B cell (primary cell): ENCODE measurements at regions of chr10 and their contacts with region 1.

Region 1: DNA sequence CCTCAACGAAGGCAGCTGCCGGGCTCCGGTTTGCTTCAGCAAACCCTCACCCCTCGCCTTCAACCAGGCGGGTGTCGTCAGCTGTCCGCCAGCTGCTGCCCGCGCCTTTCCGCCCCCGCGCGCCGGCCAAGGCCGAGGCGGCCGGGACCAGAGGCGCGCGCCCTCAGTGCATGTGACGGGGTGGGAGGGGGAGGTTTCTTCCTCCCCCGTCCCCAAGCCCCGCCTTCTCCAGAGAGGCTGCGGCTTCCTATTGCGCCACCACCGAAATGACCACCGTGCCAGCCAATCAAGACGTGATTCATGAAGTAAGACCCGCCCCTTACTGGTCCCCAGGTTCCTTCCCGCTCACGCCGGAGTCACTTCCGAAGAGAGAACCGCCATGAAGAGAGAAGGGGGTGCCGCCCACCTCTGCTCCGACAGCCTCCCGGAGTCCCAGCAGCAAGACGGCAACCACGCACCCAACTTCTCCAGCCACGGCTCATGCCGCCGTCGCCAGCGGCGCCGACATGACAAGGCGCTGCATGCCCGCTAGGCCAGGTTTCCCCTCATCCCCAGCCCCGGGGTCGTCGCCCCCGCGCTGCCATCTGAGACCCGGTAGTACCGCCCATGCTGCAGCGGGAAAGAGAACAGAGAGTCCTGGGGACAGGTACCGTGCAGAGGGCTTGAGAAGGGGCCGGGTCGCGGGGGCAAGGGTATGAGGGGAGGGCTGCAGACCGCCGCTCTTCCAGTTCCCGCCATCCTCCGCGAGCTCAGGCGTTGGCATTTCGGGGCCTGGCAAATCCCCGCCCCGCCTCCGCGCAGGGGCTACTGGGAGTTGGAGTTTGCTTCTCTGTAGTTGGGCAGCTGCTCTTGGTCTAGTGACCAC is at the start of gene SLF2:
- DNase-seq: peak; percentile 97
- ATAC-seq: peak; percentile 97
- H3K4me3 ChIP-seq: peak within 1 kb of the TSS; percentile 66 to 94 (median 90)
- H3K4me3 Mint-ChIP-seq: peak within 1 kb of the TSS; percentile 99
- H3K27ac ChIP-seq: peak within 1 kb of the TSS; percentile 66 to 90
- H3K27ac Mint-ChIP-seq: peak within 1 kb of the TSS; percentile 97
- H3K4me1 ChIP-seq: peaks cover 20% of the 10 kb centered on the region in 2 donors
- H3K4me1 Mint-ChIP-seq: peaks cover 34% of the 10 kb centered on the region
- H3K27me3 ChIP-seq: no peaks in the 10 kb centered on the region
- H3K27me3 Mint-ChIP-seq: no peaks in the 10 kb centered on the region
- CTCF ChIP-seq: no peak
- total RNA-seq, gene SLF2: 65.6 and 66.7 TPM in 2 replicates

Region 2: GRCh38 chr10:99430451-99431189 is 1482.2 kb before region 1 on chr10 and contains the start of gene GOT1:
- CTCF ChIA-PET with region 1: no interaction called
- POLR2A ChIA-PET with region 1: no interaction called
- intact Hi-C with region 1: loop called (anchors 5 kb)
- DNase-seq: peak; percentile 97
- ATAC-seq: peak; percentile 89
- H3K4me3 ChIP-seq: peak within 1 kb of the TSS; percentile 72 to 87 (median 76)
- H3K4me3 Mint-ChIP-seq: peak within 1 kb of the TSS; percentile 99
- H3K27ac ChIP-seq: peak within 1 kb of the TSS; percentile 81 to 85
- H3K27ac Mint-ChIP-seq: peak within 1 kb of the TSS; percentile 96
- H3K4me1 ChIP-seq: peaks cover 13 to 21% of the 10 kb centered on the region in 2 donors
- H3K4me1 Mint-ChIP-seq: peaks cover 28% of the 10 kb centered on the region
- H3K27me3 ChIP-seq: no peaks in the 10 kb centered on the region
- H3K27me3 Mint-ChIP-seq: no peaks in the 10 kb centered on the region
- CTCF ChIP-seq: no peak
- total RNA-seq, gene GOT1: 13.8 and 14.9 TPM in 2 replicates

Region 3: DNA sequence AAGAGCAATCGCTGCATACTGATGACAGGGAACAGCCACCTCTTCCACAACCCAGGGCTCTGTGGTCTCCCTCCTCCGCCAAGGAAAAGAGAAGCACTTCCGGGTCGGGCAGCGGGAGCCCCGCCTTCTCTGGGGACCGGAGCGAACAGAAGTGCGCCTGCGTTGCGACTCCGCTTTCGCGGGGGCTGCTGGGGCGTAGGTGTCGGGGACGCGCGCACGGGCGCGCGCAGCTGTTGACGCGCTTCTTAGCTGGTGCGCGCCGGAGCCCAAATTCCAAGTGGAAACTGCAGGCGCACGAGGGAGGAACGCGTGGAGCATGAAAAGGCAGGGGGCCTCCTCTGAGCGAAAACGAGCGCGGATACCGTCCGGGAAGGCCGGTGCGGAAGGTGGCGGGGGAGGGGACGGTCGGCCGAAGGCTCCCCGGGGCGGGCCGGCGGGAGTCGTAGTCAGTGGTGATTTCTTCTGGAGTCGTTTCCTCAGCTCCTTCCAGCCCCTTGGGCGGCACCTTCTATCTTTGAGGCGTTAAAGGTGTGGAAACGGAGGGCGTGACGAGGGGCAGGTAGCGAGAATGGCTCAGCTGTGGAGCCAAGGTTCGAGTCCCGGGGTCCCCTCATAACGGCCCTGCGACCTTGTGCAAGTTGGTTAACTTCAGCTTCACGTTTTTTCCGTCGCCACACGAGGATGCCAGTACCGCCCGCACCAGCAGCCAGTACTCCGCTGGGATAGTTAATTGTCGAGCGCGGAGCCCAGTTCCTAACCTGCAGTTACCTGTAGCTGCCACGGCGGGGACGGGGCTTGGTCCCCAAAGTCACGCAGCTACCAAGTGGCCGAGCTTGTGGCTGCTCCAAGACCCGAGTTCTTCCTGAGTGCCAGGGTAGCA is 1180.6 kb before region 1 on chr10 and contains the starts of genes COX15 and CUTC:
- CTCF ChIA-PET with region 1: no interaction called
- POLR2A ChIA-PET with region 1: no interaction called
- intact Hi-C with region 1: loop called (anchors 2 kb)
- DNase-seq: peak; percentile 95
- ATAC-seq: peak; percentile 93
- H3K4me3 ChIP-seq: peak within 1 kb of the TSS; percentile 84 to 99 (median 93)
- H3K4me3 Mint-ChIP-seq: peak within 1 kb of the TSS; percentile 95
- H3K27ac ChIP-seq: peak within 1 kb of the TSS; percentile 82 to 83
- H3K27ac Mint-ChIP-seq: peak within 1 kb of the TSS; percentile 99
- H3K4me1 ChIP-seq: peaks cover 13 to 24% of the 10 kb centered on the region in 2 donors
- H3K4me1 Mint-ChIP-seq: peaks cover 32% of the 10 kb centered on the region
- H3K27me3 ChIP-seq: no peaks in the 10 kb centered on the region
- H3K27me3 Mint-ChIP-seq: no peaks in the 10 kb centered on the region
- CTCF ChIP-seq: peak; percentile 64
- total RNA-seq, gene COX15: 39.5 and 47.4 TPM in 2 replicates
- total RNA-seq, gene CUTC: 32.0 and 33.3 TPM in 2 replicates

Region 4: DNA sequence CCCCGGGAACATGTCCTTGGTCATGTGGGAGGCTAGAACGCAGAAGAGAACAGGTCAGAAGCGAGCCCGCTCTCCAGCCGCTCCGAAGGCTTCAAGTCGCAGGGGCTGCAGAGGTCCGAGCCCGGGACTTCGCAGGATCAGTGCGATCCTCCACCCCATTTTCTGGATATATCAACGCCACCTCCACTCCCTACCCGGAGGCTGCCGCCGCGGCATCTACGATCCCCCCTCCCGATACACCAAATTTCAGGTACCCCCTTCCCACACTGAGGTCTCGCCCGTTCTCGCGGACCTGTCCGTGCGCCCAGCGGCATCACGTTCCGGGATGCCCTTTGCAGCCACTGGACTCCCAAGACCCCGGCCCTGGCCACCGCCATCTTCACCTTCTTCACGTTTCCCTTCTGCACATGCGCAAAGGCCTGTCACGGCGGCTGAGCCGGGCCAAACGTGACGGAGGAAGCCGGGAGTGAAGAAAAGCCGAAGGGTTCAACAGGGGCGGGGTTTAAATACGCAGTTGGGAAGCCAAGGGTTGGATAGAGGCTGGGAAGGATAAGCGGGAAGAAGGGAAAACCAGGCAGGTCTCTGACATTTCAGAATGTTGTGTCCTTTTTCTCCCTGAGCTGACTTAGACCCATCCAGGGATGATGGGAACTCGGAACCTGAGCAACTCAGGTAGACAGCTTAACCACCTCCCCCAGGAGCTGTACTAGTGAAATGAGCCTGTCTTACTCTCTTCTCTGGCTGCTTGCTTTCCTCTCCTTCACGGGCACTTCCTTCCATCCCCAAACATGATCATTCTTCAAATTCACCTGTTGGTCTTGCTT is 383.1 kb before region 1 on chr10 and contains the start of gene NDUFB8:
- CTCF ChIA-PET with region 1: no interaction called
- POLR2A ChIA-PET with region 1: no interaction called
- intact Hi-C with region 1: loop called (anchors 2 kb)
- DNase-seq: peak; percentile 89
- ATAC-seq: peak; percentile 87
- H3K4me3 ChIP-seq: peak within 1 kb of the TSS; percentile 65 to 98 (median 81)
- H3K4me3 Mint-ChIP-seq: peak within 1 kb of the TSS; percentile 100
- H3K27ac ChIP-seq: peak within 1 kb of the TSS; percentile 65 to 83
- H3K27ac Mint-ChIP-seq: peak within 1 kb of the TSS; percentile 98
- H3K4me1 ChIP-seq: peaks cover 16 to 21% of the 10 kb centered on the region in 2 donors
- H3K4me1 Mint-ChIP-seq: peaks cover 33% of the 10 kb centered on the region
- H3K27me3 ChIP-seq: no peaks in the 10 kb centered on the region
- H3K27me3 Mint-ChIP-seq: no peaks in the 10 kb centered on the region
- CTCF ChIP-seq: no peak
- total RNA-seq, gene NDUFB8: 131 and 143 TPM in 2 replicates

Region 5: DNA sequence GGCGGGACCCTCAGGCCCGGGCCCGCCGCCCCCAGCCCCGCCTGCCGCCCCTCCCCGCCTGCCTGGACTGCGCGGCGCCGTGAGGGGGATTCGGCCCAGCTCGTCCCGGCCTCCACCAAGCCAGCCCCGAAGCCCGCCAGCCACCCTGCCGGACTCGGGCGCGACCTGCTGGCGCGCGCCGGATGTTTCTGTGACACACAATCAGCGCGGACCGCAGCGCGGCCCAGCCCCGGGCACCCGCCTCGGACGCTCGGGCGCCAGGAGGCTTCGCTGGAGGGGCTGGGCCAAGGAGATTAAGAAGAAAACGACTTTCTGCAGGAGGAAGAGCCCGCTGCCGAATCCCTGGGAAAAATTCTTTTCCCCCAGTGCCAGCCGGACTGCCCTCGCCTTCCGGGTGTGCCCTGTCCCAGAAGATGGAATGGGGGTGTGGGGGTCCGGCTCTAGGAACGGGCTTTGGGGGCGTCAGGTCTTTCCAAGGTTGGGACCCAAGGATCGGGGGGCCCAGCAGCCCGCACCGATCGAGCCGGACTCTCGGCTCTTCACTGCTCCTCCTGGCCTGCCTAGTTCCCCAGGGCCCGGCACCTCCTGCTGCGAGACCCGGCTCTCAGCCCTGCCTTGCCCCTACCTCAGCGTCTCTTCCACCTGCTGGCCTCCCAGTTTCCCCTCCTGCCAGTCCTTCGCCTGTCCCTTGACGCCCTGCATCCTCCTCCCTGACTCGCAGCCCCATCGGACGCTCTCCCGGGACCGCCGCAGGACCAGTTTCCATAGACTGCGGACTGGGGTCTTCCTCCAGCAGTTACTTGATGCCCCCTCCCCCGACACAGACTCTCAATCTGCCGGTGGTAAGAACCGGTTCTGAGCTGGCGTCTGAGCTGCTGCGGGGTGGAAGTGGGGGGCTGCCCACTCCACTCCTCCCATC is 84.8 kb before region 1 on chr10:
- CTCF ChIA-PET with region 1: no interaction called
- POLR2A ChIA-PET with region 1: no interaction called
- intact Hi-C with region 1: loop called (anchors 5 kb)
- DNase-seq: peak; percentile 63
- ATAC-seq: peak; percentile 46
- H3K4me3 ChIP-seq: peak overlapping the region in 4 of 5 experiments; percentile 46 to 71 (median 62)
- H3K4me3 Mint-ChIP-seq: peak overlapping the region; percentile 87
- H3K27ac ChIP-seq: no peak overlapping the region
- H3K27ac Mint-ChIP-seq: peak overlapping the region; percentile 53
- H3K4me1 ChIP-seq: peaks cover 49 to 54% of the 10 kb centered on the region in 2 donors
- H3K4me1 Mint-ChIP-seq: peaks cover 43% of the 10 kb centered on the region
- H3K27me3 ChIP-seq: peaks cover 0 to 91% (median 59%) of the 10 kb centered on the region in 4 experiments
- H3K27me3 Mint-ChIP-seq: peaks cover 75% of the 10 kb centered on the region
- CTCF ChIP-seq: no peak

Region 6: GRCh38 chr10:100986952-100987750 is 74.3 kb after region 1 on chr10 and contains the starts of genes MRPL43 and TWNK:
- CTCF ChIA-PET with region 1: no interaction called
- POLR2A ChIA-PET with region 1: no interaction called
- intact Hi-C with region 1: loop called (anchors 1 kb)
- DNase-seq: peak; percentile 91
- ATAC-seq: peak; percentile 93
- H3K4me3 ChIP-seq: peak within 1 kb of the TSS; percentile 68 to 95 (median 94)
- H3K4me3 Mint-ChIP-seq: peak within 1 kb of the TSS; percentile 97
- H3K27ac ChIP-seq: peak within 1 kb of the TSS; percentile 15 to 51
- H3K27ac Mint-ChIP-seq: peak within 1 kb of the TSS; percentile 84
- H3K4me1 ChIP-seq: peaks cover 18 to 28% of the 10 kb centered on the region in 2 donors
- H3K4me1 Mint-ChIP-seq: peaks cover 36% of the 10 kb centered on the region
- H3K27me3 ChIP-seq: no peaks in the 10 kb centered on the region
- H3K27me3 Mint-ChIP-seq: no peaks in the 10 kb centered on the region
- CTCF ChIP-seq: no peak
- total RNA-seq, gene MRPL43: 56.2 and 57.8 TPM in 2 replicates
- total RNA-seq, gene TWNK: 11.8 and 12.0 TPM in 2 replicates